HEK293 (cell line): ENCODE measurements at regions of chr6 and their contacts with region 1.

Region 1: GRCh38 chr6:108820006-108820405 is 28.2 kb upstream of the ARMC2 start:
- H3K4me3 ChIP-seq: no peak overlapping the region
- H3K27ac ChIP-seq: no peak overlapping the region
- H3K4me1 ChIP-seq: no peaks in the 10 kb centered on the region
- CTCF ChIP-seq: no peak

Region 2: GRCh38 chr6:108083349-108083748 is 736.7 kb before region 1 on chr6:
- CTCF ChIA-PET with region 1: no interaction called
- POLR2A ChIA-PET with region 1: no interaction called
- H3K4me3 ChIP-seq: no peak overlapping the region
- H3K27ac ChIP-seq: no peak overlapping the region
- H3K4me1 ChIP-seq: no peaks in the 10 kb centered on the region
- CTCF ChIP-seq: no peak

Region 3: GRCh38 chr6:108616544-108616943 is 203.5 kb before region 1 on chr6:
- CTCF ChIA-PET with region 1: no interaction called
- POLR2A ChIA-PET with region 1: interaction called, 13 read pairs
- H3K4me3 ChIP-seq: no peak overlapping the region
- H3K27ac ChIP-seq: no peak overlapping the region
- H3K4me1 ChIP-seq: peaks cover 28% of the 10 kb centered on the region
- CTCF ChIP-seq: no peak

Region 4: DNA sequence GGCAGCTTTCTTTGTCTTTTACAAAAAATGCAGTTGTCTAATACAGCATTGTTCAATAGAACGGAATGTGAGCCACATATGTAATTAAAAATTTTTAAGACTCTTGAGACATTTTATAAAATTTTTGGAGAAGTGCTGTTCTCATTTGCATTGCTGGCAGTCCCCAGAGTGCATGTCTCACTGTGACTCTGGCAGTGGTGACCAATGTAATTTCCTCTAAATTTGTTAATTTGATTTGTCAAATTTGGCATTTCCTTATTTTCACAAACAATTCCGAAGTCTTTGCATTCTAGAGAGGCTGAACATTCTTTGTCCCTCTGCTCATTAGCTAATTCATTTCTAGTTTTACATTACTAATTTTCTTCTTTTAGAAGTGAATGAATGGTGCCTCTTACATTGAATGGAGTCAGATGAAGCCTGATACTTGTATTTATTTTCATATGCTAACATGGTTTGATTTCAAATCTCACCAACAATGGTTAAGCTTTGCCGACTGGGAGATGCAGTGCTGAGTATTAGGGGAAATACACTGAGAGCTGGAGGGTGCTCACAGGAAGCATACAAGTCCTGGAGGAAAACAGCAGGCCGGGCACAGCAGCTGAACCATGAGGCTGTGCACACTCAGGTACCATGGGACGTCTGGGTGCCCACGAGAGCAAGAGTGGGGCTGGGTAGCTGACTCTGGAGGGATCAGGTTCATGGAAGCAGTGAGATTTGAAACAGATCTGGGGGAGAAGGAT is 40.3 kb before region 1 on chr6:
- CTCF ChIA-PET with region 1: no interaction called
- POLR2A ChIA-PET with region 1: no interaction called
- H3K4me3 ChIP-seq: no peak overlapping the region
- H3K27ac ChIP-seq: no peak overlapping the region
- H3K4me1 ChIP-seq: peaks cover 6% of the 10 kb centered on the region
- CTCF ChIP-seq: no peak

Region 5: DNA sequence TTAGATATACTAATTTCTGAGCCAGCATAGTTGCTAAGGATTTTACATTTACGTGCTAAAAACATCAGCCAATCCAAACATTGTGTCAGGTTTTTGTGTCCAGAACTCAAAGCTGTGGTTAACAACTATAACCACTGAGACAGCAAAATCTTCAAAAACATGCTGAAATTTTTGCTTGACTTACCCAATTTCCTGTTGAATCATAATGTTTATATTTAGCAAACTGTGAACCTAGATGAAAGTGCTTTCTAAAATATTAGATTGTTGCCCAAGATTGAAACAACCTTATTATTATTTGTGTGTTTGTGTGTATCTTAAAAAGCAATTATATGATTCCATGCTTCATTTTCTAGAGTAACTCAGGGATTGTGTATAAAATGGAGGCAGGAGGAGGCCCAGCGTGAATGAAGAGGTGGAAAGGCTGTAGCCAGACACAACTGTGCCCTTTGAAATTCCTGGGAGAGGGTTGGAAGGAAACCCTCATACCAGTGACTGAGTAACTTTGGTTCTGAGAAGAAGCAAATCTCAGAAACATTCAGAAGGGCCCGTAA is 76.2 kb after region 1 on chr6:
- CTCF ChIA-PET with region 1: no interaction called
- POLR2A ChIA-PET with region 1: no interaction called
- H3K4me3 ChIP-seq: no peak overlapping the region
- H3K27ac ChIP-seq: no peak overlapping the region
- H3K4me1 ChIP-seq: no peaks in the 10 kb centered on the region
- CTCF ChIP-seq: no peak

Region 6: GRCh38 chr6:109382576-109383437 is 562.8 kb after region 1 on chr6:
- CTCF ChIA-PET with region 1: no interaction called
- POLR2A ChIA-PET with region 1: no interaction called
- H3K4me3 ChIP-seq: peak overlapping the region; percentile 78
- H3K27ac ChIP-seq: peak overlapping the region; percentile 98
- H3K4me1 ChIP-seq: peaks cover 8% of the 10 kb centered on the region
- CTCF ChIP-seq: peak; percentile 55